Activated naive CD4-positive, alpha-beta T cell treated with anti-CD3 and anti-CD28 coated beads for 36 hours (primary cell): ENCODE measurements at regions of chr3 and their contacts with region 1.

Region 1: DNA sequence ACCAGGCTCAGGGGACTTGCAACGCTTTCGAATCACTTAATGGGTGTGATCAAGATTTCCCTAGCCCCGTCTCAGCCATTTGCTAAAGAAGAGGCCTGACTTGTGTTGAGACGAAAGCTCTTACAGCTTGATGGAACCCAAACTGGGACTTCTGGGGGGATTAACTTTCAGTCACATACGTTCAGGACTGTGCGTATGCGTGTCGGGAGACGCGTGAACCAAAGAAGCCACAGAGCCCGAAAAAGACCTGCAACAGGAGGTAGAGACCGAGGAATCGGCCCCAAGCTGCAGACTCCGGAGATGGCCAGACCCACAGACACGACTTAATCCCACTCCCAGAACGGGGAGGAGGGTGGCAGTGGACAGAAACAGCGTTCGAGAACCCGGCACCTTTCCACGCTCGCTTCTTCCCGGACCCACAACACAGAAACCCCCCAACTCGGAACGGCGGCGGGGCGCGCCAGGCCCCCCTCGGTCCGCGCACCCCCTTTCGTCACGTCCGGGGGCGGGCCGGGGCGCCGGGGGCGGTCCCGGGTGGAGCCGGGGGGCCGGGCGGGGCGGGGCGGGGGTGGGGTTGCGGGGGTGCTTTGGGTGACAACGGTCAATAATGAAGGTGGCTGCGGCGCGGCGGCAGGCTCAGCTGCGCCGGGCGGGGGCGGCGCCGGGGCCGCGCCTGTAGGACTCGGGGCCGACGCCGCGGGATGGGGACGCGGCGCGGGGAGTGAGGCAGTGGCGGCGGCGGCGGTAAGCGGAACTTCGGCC is at the start of gene ATP11B:
- DNase-seq: peak; percentile 70
- H3K4me3 Mint-ChIP-seq: peak within 1 kb of the TSS; percentile 99
- H3K27ac Mint-ChIP-seq: peak within 1 kb of the TSS; percentile 97
- H3K4me1 Mint-ChIP-seq: peaks cover 25% of the 10 kb centered on the region
- H3K27me3 Mint-ChIP-seq: no peaks in the 10 kb centered on the region
- total RNA-seq, gene ATP11B: 86.6 to 92.3 TPM

Region 2: GRCh38 chr3:182713743-182714517 is 79.2 kb before region 1 on chr3:
- CTCF ChIA-PET with region 1: interaction called, 12 read pairs
- intact Hi-C with region 1: loop called (anchors 1 kb)
- DNase-seq: no peak
- H3K4me3 Mint-ChIP-seq: no peak overlapping the region
- H3K27ac Mint-ChIP-seq: no peak overlapping the region
- H3K4me1 Mint-ChIP-seq: peaks cover 8% of the 10 kb centered on the region
- H3K27me3 Mint-ChIP-seq: no peaks in the 10 kb centered on the region

Region 3: DNA sequence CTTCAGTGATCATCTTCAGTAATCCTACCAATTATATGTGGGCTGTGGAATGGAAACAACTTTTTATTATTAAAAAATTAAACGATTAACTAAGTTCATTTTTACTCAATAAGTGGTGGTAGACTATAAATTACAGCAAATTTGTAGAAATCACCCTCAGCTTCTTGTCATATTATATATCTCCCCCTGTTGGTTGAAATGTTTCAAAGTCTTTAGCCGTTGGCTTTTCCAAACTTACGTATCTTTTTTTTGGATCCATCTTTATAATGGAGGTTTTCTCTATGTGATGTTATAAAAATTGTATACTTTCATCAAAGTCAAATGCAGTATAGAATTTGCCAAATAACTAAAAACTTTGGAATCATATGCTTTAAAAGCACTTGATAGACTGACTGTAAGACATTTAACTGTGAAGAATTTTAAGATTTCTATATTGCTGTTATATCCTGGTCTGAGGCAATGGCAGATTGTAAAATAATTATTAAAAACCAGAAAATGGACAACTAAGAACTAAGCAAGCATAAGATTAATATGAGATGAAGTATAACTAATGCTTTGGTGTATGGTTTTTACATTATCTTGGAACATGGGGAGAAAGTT is 44.9 kb after region 1 on chr3:
- CTCF ChIA-PET with region 1: interaction called, 4 read pairs
- intact Hi-C with region 1: loop called (anchors 2 kb)
- DNase-seq: no peak
- H3K4me3 Mint-ChIP-seq: no peak overlapping the region
- H3K27ac Mint-ChIP-seq: no peak overlapping the region
- H3K4me1 Mint-ChIP-seq: peaks cover 8% of the 10 kb centered on the region
- H3K27me3 Mint-ChIP-seq: no peaks in the 10 kb centered on the region

Region 4: GRCh38 chr3:183158551-183159006 is 365.5 kb after region 1 on chr3:
- CTCF ChIA-PET with region 1: no interaction called
- intact Hi-C with region 1: loop called (anchors 1 kb)
- DNase-seq: peak; percentile 80
- H3K4me3 Mint-ChIP-seq: peak overlapping the region; percentile 19
- H3K27ac Mint-ChIP-seq: peak overlapping the region; percentile 74
- H3K4me1 Mint-ChIP-seq: peaks cover 41% of the 10 kb centered on the region
- H3K27me3 Mint-ChIP-seq: no peaks in the 10 kb centered on the region

Region 5: DNA sequence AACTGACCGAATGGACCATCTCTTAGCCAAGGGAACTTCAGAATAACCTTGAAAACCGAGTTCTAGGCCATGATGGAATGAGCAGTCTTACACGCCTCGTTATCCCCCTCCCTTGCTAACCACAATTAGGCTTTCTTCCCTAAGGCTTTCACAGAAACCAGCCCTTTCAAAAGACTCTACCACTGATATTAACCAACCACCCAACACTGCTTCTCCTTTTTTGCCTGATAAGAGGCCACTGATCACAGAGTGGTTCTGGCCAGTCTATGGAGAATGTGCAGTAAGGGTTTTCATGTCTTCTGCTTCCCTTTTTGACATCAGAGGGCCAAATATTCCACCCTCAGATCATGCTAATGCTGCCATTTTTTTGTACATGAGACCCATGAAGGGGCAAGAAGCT is 576.0 kb after region 1 on chr3:
- CTCF ChIA-PET with region 1: no interaction called
- intact Hi-C with region 1: loop called (anchors 10 kb)
- DNase-seq: no peak
- H3K4me3 Mint-ChIP-seq: no peak overlapping the region
- H3K27ac Mint-ChIP-seq: no peak overlapping the region
- H3K4me1 Mint-ChIP-seq: peaks cover 36% of the 10 kb centered on the region
- H3K27me3 Mint-ChIP-seq: no peaks in the 10 kb centered on the region